HEK293 (cell line): ENCODE measurements at regions of chr14 and their contacts with region 1.

Region 1: GRCh38 chr14:61925043-61925442 is 162.8 kb downstream of the SNAPC1 start:
- H3K4me3 ChIP-seq: no peak overlapping the region
- H3K27ac ChIP-seq: no peak overlapping the region
- H3K4me1 ChIP-seq: peaks cover 6% of the 10 kb centered on the region
- CTCF ChIP-seq: no peak

Region 2: GRCh38 chr14:61911574-61911973 is 13.5 kb before region 1 on chr14:
- CTCF ChIA-PET with region 1: no interaction called
- POLR2A ChIA-PET with region 1: no interaction called
- H3K4me3 ChIP-seq: no peak overlapping the region
- H3K27ac ChIP-seq: no peak overlapping the region
- H3K4me1 ChIP-seq: no peaks in the 10 kb centered on the region
- CTCF ChIP-seq: no peak

Region 3: DNA sequence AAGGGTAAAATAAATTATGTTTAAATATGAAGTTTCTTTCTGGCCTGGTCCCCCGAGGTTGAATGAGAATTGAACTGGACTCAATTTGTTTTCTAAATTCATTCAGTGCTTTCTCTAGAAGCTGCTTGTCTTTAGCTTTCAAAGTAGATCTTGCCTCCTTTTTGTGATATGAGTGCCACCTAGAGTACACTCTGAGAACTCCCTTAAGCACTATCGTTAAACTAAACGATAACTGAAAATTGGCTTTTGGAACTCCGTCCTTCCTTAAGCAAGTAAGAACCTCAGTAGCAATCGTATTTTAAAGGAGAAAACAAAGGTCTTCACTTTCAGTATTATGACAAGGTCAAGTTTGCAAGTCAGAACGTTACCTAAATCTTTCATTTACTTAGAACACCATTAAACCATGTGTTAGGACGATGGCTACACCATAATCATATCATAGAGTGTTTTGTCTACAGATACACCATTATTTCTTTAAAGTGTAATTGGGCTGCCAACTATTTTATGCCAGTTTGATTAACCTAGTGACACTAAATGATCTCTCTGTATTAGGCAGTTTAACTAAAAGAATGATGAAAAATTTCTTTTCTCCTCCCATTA is 201.9 kb after region 1 on chr14:
- CTCF ChIA-PET with region 1: interaction called, 20 read pairs
- POLR2A ChIA-PET with region 1: no interaction called
- H3K4me3 ChIP-seq: no peak overlapping the region
- H3K27ac ChIP-seq: no peak overlapping the region
- H3K4me1 ChIP-seq: no peaks in the 10 kb centered on the region
- CTCF ChIP-seq: peak; percentile 35; the same call in 1 of the 2 replicates